T-cell (primary cell): ENCODE measurements at regions of chr11 and their contacts with region 1.

Region 1: GRCh38 chr11:46524201-46524770 is 69.5 kb downstream of the AMBRA1 start:
- DNase-seq: no peak
- ATAC-seq: no peak
- H3K4me3 ChIP-seq: no peak overlapping the region
- H3K4me3 Mint-ChIP-seq: no peak overlapping the region
- H3K27ac ChIP-seq: no peak overlapping the region
- H3K27ac Mint-ChIP-seq: no peak overlapping the region
- H3K4me1 ChIP-seq: peaks cover 3 to 5% of the 10 kb centered on the region in 2 experiments
- H3K4me1 Mint-ChIP-seq: peaks cover 38 to 54% (median 46%) of the 10 kb centered on the region in 3 donors
- H3K27me3 ChIP-seq: no peaks in the 10 kb centered on the region
- H3K27me3 Mint-ChIP-seq: no peaks in the 10 kb centered on the region

Region 2: GRCh38 chr11:46026606-46027293 is 497.5 kb before region 1 on chr11:
- CTCF ChIA-PET with region 1: interaction called in 1 of 2 experiments, 10 read pairs
- POLR2A ChIA-PET with region 1: no interaction called
- DNase-seq: no peak
- ATAC-seq: no peak
- H3K4me3 ChIP-seq: no peak overlapping the region
- H3K4me3 Mint-ChIP-seq: no peak overlapping the region
- H3K27ac ChIP-seq: no peak overlapping the region
- H3K27ac Mint-ChIP-seq: no peak overlapping the region
- H3K4me1 ChIP-seq: no peaks in the 10 kb centered on the region
- H3K4me1 Mint-ChIP-seq: peaks cover 4 to 13% (median 6%) of the 10 kb centered on the region in 3 donors
- H3K27me3 ChIP-seq: no peaks in the 10 kb centered on the region
- H3K27me3 Mint-ChIP-seq: no peaks in the 10 kb centered on the region

Region 3: GRCh38 chr11:46876471-46876870 is 352.2 kb after region 1 on chr11:
- CTCF ChIA-PET with region 1: no interaction called
- POLR2A ChIA-PET with region 1: no interaction called
- DNase-seq: no peak
- ATAC-seq: no peak
- H3K4me3 ChIP-seq: no peak overlapping the region
- H3K4me3 Mint-ChIP-seq: no peak overlapping the region
- H3K27ac ChIP-seq: no peak overlapping the region
- H3K27ac Mint-ChIP-seq: no peak overlapping the region
- H3K4me1 ChIP-seq: no peaks in the 10 kb centered on the region
- H3K4me1 Mint-ChIP-seq: no peaks in the 10 kb centered on the region
- H3K27me3 ChIP-seq: peaks cover 0 to 27% of the 10 kb centered on the region in 2 experiments
- H3K27me3 Mint-ChIP-seq: peaks cover 4 to 5% of the 10 kb centered on the region in 2 donors